CD4-positive, alpha-beta memory T cell (primary cell): ENCODE measurements at regions of chr10 and their contacts with region 1.

Region 1: GRCh38 chr10:6088721-6089390 is at the start of gene RBM17:
- DNase-seq: peak; percentile 95 to 100 (median 98)
- H3K4me3 ChIP-seq: peak within 1 kb of the TSS; percentile 68 to 94
- H3K4me3 Mint-ChIP-seq: peak within 1 kb of the TSS; percentile 85 to 99 (median 91)
- H3K27ac ChIP-seq: peak within 1 kb of the TSS; percentile 80
- H3K27ac Mint-ChIP-seq: peak within 1 kb of the TSS; percentile 75 to 96 (median 91)
- H3K4me1 ChIP-seq: peaks cover 57% of the 10 kb centered on the region
- H3K4me1 Mint-ChIP-seq: peaks cover 38 to 70% (median 53%) of the 10 kb centered on the region in 4 donors
- H3K27me3 ChIP-seq: no peaks in the 10 kb centered on the region
- H3K27me3 Mint-ChIP-seq: no peaks in the 10 kb centered on the region
- total RNA-seq, gene RBM17: 117 to 125 TPM

Region 2: GRCh38 chr10:5889624-5890451 is 199.0 kb before region 1 on chr10 and contains the starts of genes ANKRD16 and FBH1:
- CTCF ChIA-PET with region 1: interaction called, 10 read pairs
- POLR2A ChIA-PET with region 1: interaction called, 9 read pairs
- intact Hi-C with region 1: loop called (anchors 5 kb)
- DNase-seq: peak; percentile 95 to 98 (median 95)
- H3K4me3 ChIP-seq: peak within 1 kb of the TSS; percentile 54 to 71
- H3K4me3 Mint-ChIP-seq: peak within 1 kb of the TSS; percentile 91 to 98 (median 93)
- H3K27ac ChIP-seq: peak within 1 kb of the TSS; percentile 79
- H3K27ac Mint-ChIP-seq: peak within 1 kb of the TSS; percentile 87 to 95 (median 92)
- H3K4me1 ChIP-seq: peaks cover 33% of the 10 kb centered on the region
- H3K4me1 Mint-ChIP-seq: peaks cover 36 to 58% (median 45%) of the 10 kb centered on the region in 4 donors
- H3K27me3 ChIP-seq: no peaks in the 10 kb centered on the region
- H3K27me3 Mint-ChIP-seq: no peaks in the 10 kb centered on the region
- total RNA-seq, gene ANKRD16: 6.6 to 8.4 TPM
- total RNA-seq, gene FBH1: 91.4 to 97.5 TPM

Region 3: GRCh38 chr10:5960070-5960972 is 128.5 kb before region 1 on chr10:
- CTCF ChIA-PET with region 1: no interaction called
- POLR2A ChIA-PET with region 1: no interaction called
- intact Hi-C with region 1: no loop called
- DNase-seq: no peak
- H3K4me3 ChIP-seq: no peak overlapping the region
- H3K4me3 Mint-ChIP-seq: no peak overlapping the region
- H3K27ac ChIP-seq: no peak overlapping the region
- H3K27ac Mint-ChIP-seq: peak overlapping the region in 2 of 7 donors; percentile 29 to 79
- H3K4me1 ChIP-seq: no peaks in the 10 kb centered on the region
- H3K4me1 Mint-ChIP-seq: peaks cover 0 to 1% (median 0%) of the 10 kb centered on the region in 4 donors
- H3K27me3 ChIP-seq: no peaks in the 10 kb centered on the region
- H3K27me3 Mint-ChIP-seq: no peaks in the 10 kb centered on the region

Region 4: GRCh38 chr10:6027929-6028328 is 60.9 kb before region 1 on chr10:
- CTCF ChIA-PET with region 1: interaction called, 16 read pairs
- POLR2A ChIA-PET with region 1: no interaction called
- intact Hi-C with region 1: no loop called
- DNase-seq: no peak
- H3K4me3 ChIP-seq: no peak overlapping the region
- H3K4me3 Mint-ChIP-seq: peak overlapping the region in 3 of 8 donors; percentile 34 to 41 (median 41)
- H3K27ac ChIP-seq: no peak overlapping the region
- H3K27ac Mint-ChIP-seq: peak overlapping the region in 4 of 7 donors; percentile 22 to 87 (median 59)
- H3K4me1 ChIP-seq: peaks cover 19% of the 10 kb centered on the region
- H3K4me1 Mint-ChIP-seq: peaks cover 17 to 53% (median 30%) of the 10 kb centered on the region in 4 donors
- H3K27me3 ChIP-seq: no peaks in the 10 kb centered on the region
- H3K27me3 Mint-ChIP-seq: no peaks in the 10 kb centered on the region

Region 5: GRCh38 chr10:6062101-6062771 is 26.6 kb before region 1 on chr10 and contains the start of gene IL2RA:
- CTCF ChIA-PET with region 1: interaction called, 53 read pairs
- POLR2A ChIA-PET with region 1: interaction called, 9 read pairs
- intact Hi-C with region 1: loop called (anchors 1 kb)
- DNase-seq: peak; percentile 69 to 86 (median 75)
- H3K4me3 ChIP-seq: peak within 1 kb of the TSS; percentile 71 to 89
- H3K4me3 Mint-ChIP-seq: peak within 1 kb of the TSS; percentile 97 to 99 (median 98)
- H3K27ac ChIP-seq: peak within 1 kb of the TSS; percentile 83
- H3K27ac Mint-ChIP-seq: peak within 1 kb of the TSS; percentile 95 to 98 (median 96)
- H3K4me1 ChIP-seq: peaks cover 80% of the 10 kb centered on the region
- H3K4me1 Mint-ChIP-seq: peaks cover 44 to 88% (median 65%) of the 10 kb centered on the region in 4 donors
- H3K27me3 ChIP-seq: no peaks in the 10 kb centered on the region
- H3K27me3 Mint-ChIP-seq: no peaks in the 10 kb centered on the region
- total RNA-seq, gene IL2RA: 15.1 to 17.1 TPM

Region 6: GRCh38 chr10:6144406-6145165 is 55.7 kb after region 1 on chr10:
- CTCF ChIA-PET with region 1: interaction called, 3 read pairs
- POLR2A ChIA-PET with region 1: interaction called, 3 read pairs
- intact Hi-C with region 1: loop called (anchors 2 kb)
- DNase-seq: peak; percentile 85 to 92 (median 87)
- H3K4me3 ChIP-seq: peak overlapping the region; percentile 61 to 85
- H3K4me3 Mint-ChIP-seq: peak overlapping the region; percentile 88 to 95 (median 91)
- H3K27ac ChIP-seq: peak overlapping the region; percentile 84
- H3K27ac Mint-ChIP-seq: peak overlapping the region; percentile 89 to 97 (median 92)
- H3K4me1 ChIP-seq: peaks cover 77% of the 10 kb centered on the region
- H3K4me1 Mint-ChIP-seq: peaks cover 45 to 85% (median 64%) of the 10 kb centered on the region in 4 donors
- H3K27me3 ChIP-seq: no peaks in the 10 kb centered on the region
- H3K27me3 Mint-ChIP-seq: no peaks in the 10 kb centered on the region

Region 7: DNA sequence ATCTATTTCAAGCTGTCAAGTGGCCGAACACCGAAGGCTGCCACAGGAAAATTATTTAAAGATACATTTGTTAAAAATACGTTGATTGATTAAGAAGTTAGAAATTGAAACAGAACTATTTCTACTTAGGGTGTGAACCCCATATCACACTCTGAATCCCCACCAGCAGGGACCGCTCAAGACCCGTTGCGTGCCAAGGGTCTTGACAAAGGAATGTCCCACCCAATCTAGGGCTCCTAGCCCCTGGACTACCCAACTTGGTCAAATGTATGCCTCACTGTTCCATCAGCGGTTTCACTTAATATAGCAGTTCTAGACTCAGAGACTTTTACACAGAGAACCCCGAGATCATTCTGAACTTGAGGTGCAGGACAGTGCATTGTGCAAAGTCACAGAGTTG is 102.3 kb after region 1 on chr10:
- CTCF ChIA-PET with region 1: no interaction called
- POLR2A ChIA-PET with region 1: no interaction called
- intact Hi-C with region 1: no loop called
- DNase-seq: no peak
- H3K4me3 ChIP-seq: no peak overlapping the region
- H3K4me3 Mint-ChIP-seq: no peak overlapping the region
- H3K27ac ChIP-seq: no peak overlapping the region
- H3K27ac Mint-ChIP-seq: no peak overlapping the region
- H3K4me1 ChIP-seq: peaks cover 8% of the 10 kb centered on the region
- H3K4me1 Mint-ChIP-seq: peaks cover 22 to 70% (median 24%) of the 10 kb centered on the region in 4 donors
- H3K27me3 ChIP-seq: no peaks in the 10 kb centered on the region
- H3K27me3 Mint-ChIP-seq: no peaks in the 10 kb centered on the region

Region 8: GRCh38 chr10:6678211-6678803 is 589.5 kb after region 1 on chr10:
- CTCF ChIA-PET with region 1: interaction called, 6 read pairs
- POLR2A ChIA-PET with region 1: no interaction called
- intact Hi-C with region 1: loop called (anchors 5 kb)
- DNase-seq: peak; percentile 53 to 59 (median 55)
- H3K4me3 ChIP-seq: no peak overlapping the region
- H3K4me3 Mint-ChIP-seq: no peak overlapping the region
- H3K27ac ChIP-seq: no peak overlapping the region
- H3K27ac Mint-ChIP-seq: peak overlapping the region in 1 of 7 donors; percentile 52
- H3K4me1 ChIP-seq: no peaks in the 10 kb centered on the region
- H3K4me1 Mint-ChIP-seq: peaks cover 0 to 6% (median 5%) of the 10 kb centered on the region in 4 donors
- H3K27me3 ChIP-seq: peaks cover 3% of the 10 kb centered on the region
- H3K27me3 Mint-ChIP-seq: peaks cover 4 to 9% of the 10 kb centered on the region in 2 donors